WTC11 (cell line): ENCODE measurements at regions of chr12 and their contacts with region 1.

Region 1: DNA sequence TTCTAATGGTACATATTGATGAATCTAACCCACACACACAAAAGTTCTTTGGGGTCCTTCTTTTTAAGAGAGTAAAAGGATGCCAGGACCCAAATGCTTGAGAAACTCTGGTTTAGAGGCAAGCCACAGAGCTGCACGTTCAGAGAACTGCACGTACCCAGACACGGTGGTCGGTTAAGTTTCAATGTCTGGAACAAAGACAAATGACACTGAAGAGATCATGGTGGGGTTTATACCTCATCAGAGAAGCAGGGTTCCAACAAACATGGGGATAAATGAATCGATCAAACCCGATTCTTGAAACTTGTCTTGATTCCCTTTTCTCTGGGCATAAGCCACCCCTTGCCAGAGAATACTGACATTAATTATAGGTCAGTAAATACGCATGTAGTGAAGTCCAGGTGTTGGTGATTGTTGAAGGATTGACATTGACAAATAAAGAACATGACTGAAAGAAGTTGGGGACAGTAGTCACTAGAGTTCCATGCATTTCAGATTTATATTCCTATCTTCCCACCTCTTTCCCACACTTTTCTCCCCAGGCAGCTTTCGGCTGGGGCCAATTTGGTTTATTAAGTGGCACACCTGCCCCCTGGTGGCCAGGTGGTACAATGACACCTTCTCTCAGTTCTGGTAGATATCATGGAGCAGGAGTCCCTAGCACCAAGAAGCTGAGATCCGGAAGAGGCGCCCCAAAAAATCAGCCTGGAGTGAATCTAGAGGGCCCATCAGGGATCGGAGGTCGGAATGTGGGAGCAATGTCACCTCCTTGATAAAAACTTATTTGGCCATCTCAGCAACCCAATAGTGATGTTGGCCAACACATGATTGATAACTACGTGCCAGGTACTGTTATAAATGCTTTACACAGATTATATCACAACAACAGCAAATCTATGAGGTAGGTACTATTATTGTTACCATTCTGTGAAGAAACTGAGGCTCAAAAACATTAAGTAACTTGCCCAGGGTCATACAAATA is 17.8 kb upstream of the HDAC7 start:
- DNase-seq: peak; percentile 75
- ATAC-seq: peak; percentile 61
- H3K4me3 Mint-ChIP-seq: no peak overlapping the region
- H3K27ac Mint-ChIP-seq: no peak overlapping the region
- H3K4me1 Mint-ChIP-seq: peaks cover 19% of the 10 kb centered on the region
- H3K27me3 Mint-ChIP-seq: no peaks in the 10 kb centered on the region
- CTCF ChIP-seq: peak; percentile 96

Region 2: DNA sequence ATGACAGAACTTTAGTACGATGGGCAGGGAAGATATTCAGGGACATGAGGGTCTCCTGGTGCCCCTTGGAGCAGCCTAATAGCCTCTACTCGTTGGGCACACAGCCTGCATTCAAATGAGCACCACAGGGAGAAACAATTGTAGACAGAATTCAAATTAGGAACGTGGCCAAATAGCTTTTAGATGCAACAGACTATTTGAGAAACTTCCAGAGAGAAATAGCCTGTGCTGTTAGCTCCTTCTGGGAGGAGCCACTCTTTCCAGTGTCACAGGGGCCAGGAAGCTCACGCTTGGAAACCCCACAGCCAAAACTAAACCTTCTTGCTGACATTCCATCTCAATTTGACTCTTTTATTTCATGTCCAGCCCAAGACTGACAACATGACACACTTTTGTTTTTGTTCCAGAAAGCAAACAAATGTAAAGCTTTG is 246.1 kb before region 1 on chr12:
- CTCF ChIA-PET with region 1: no interaction called
- POLR2A ChIA-PET with region 1: no interaction called
- DNase-seq: no peak
- ATAC-seq: 0 out of 2 replicates have a peak, but pooled peaks have one; percentile 32
- H3K4me3 Mint-ChIP-seq: no peak overlapping the region
- H3K27ac Mint-ChIP-seq: no peak overlapping the region
- H3K4me1 Mint-ChIP-seq: peaks cover 13% of the 10 kb centered on the region
- H3K27me3 Mint-ChIP-seq: no peaks in the 10 kb centered on the region; the same call in 1 of the 2 replicates
- CTCF ChIP-seq: no peak

Region 3: DNA sequence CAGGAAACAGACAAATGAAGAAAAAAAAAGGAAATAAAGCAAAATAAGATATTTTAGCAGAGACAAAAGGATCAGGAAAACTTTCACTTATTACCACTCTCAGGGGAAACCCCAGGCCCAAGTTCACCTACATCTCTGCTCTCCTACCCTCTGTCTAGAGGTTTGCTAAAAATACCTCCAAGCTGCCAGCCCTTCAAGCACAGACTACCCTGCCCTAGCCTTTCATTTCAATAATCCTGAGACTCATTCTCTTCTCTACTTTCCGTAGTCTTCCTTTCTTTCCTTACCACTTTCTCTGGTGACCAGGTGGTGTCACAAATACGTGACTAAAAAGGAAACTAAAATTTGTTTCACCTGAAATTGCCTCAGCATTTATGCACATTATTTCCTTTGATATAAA is 165.4 kb before region 1 on chr12:
- CTCF ChIA-PET with region 1: no interaction called
- POLR2A ChIA-PET with region 1: no interaction called
- DNase-seq: no peak
- ATAC-seq: no peak
- H3K4me3 Mint-ChIP-seq: no peak overlapping the region
- H3K27ac Mint-ChIP-seq: 0 out of 2 replicates have a peak overlapping the region, but pooled peaks have one; percentile 14
- H3K4me1 Mint-ChIP-seq: peaks cover 8% of the 10 kb centered on the region; the same call in 1 of the 2 replicates
- H3K27me3 Mint-ChIP-seq: no peaks in the 10 kb centered on the region
- CTCF ChIP-seq: no peak

Region 4: DNA sequence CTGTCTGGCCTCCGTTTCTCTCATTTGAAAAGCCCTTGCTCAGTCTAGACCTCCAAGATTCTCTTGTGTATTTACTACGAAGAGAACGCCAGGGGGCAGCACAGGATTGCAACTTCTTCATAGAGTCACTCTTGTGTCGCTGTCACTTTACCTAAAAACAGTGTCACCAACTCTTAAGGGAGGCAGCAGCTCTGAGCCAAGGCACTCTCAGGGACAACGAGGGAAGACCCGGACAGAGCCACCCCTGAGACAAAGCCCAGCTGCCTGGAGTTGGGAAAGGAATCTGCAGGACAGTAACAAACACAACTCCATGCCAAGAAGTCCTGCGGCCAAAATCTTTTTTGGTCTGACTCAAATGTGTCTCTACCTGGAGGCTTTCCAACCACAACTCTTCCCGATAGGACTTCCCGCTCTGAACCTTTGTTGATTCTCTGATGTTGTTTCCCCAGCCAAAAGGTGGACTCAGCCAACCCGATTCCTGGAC is 122.0 kb before region 1 on chr12:
- CTCF ChIA-PET with region 1: interaction called, 54 read pairs
- POLR2A ChIA-PET with region 1: no interaction called
- DNase-seq: peak; percentile 71
- ATAC-seq: peak; percentile 43
- H3K4me3 Mint-ChIP-seq: no peak overlapping the region
- H3K27ac Mint-ChIP-seq: no peak overlapping the region
- H3K4me1 Mint-ChIP-seq: peaks cover 29% of the 10 kb centered on the region
- H3K27me3 Mint-ChIP-seq: peaks cover 72% of the 10 kb centered on the region
- CTCF ChIP-seq: peak; percentile 72

Region 5: GRCh38 chr12:47753034-47754001 is 84.2 kb before region 1 on chr12:
- CTCF ChIA-PET with region 1: interaction called, 41 read pairs
- POLR2A ChIA-PET with region 1: no interaction called
- DNase-seq: peak; percentile 53
- ATAC-seq: peak; percentile 86
- H3K4me3 Mint-ChIP-seq: peak overlapping the region; percentile 44; the same call in 1 of the 2 replicates
- H3K27ac Mint-ChIP-seq: peak overlapping the region; percentile 96
- H3K4me1 Mint-ChIP-seq: peaks cover 62% of the 10 kb centered on the region
- H3K27me3 Mint-ChIP-seq: no peaks in the 10 kb centered on the region; the same call in 1 of the 2 replicates
- CTCF ChIP-seq: no peak

Region 6: GRCh38 chr12:47773062-47773857 is 64.2 kb before region 1 on chr12 and contains the start of gene SLC48A1:
- CTCF ChIA-PET with region 1: interaction called, 110 read pairs
- POLR2A ChIA-PET with region 1: interaction called, 5 read pairs
- DNase-seq: peak; percentile 80
- ATAC-seq: peak; percentile 81
- H3K4me3 Mint-ChIP-seq: peak within 1 kb of the TSS; percentile 82
- H3K27ac Mint-ChIP-seq: peak within 1 kb of the TSS; percentile 32; the same call in 1 of the 2 replicates
- H3K4me1 Mint-ChIP-seq: peaks cover 32% of the 10 kb centered on the region
- H3K27me3 Mint-ChIP-seq: peaks cover 27% of the 10 kb centered on the region
- CTCF ChIP-seq: no peak
- total RNA-seq, gene SLC48A1: 13.5 to 16.8 TPM (median 13.8 TPM) in 3 replicates

Region 7: DNA sequence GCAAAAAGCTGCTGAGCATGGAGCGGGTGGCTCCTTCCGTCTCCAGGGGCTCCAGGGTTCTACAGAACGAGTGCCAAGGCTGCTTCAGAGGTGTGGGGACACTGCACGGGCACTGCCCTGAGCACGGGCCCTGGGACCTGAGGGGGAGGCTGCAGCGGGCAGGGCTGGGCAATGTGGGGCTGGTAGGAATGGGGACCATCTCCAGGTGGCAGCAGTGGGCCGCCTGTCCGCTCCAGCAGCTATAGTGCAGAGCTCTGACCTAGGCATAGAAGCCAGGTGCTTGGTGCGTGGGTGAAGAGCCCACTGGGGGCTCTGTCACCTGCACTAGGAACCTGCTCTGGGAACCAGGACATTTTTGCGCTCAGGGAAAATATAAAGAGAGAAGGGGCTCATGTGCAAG is 40.0 kb before region 1 on chr12:
- CTCF ChIA-PET with region 1: interaction called, 408 read pairs
- POLR2A ChIA-PET with region 1: interaction called, 4 read pairs
- DNase-seq: peak; percentile 69
- ATAC-seq: peak; percentile 83
- H3K4me3 Mint-ChIP-seq: no peak overlapping the region
- H3K27ac Mint-ChIP-seq: no peak overlapping the region; the same call in 1 of the 2 replicates
- H3K4me1 Mint-ChIP-seq: peaks cover 28% of the 10 kb centered on the region
- H3K27me3 Mint-ChIP-seq: no peaks in the 10 kb centered on the region
- CTCF ChIP-seq: 0 out of 2 replicates have a peak, but pooled peaks have one; percentile 27

Region 8: GRCh38 chr12:47850153-47851084 is 12.9 kb after region 1 on chr12:
- CTCF ChIA-PET with region 1: interaction called, 20 read pairs
- POLR2A ChIA-PET with region 1: no interaction called
- DNase-seq: no peak
- ATAC-seq: peak; percentile 25
- H3K4me3 Mint-ChIP-seq: no peak overlapping the region
- H3K27ac Mint-ChIP-seq: no peak overlapping the region
- H3K4me1 Mint-ChIP-seq: peaks cover 20% of the 10 kb centered on the region
- H3K27me3 Mint-ChIP-seq: peaks cover 2% of the 10 kb centered on the region; the same call in 1 of the 2 replicates
- CTCF ChIP-seq: no peak

Region 9: DNA sequence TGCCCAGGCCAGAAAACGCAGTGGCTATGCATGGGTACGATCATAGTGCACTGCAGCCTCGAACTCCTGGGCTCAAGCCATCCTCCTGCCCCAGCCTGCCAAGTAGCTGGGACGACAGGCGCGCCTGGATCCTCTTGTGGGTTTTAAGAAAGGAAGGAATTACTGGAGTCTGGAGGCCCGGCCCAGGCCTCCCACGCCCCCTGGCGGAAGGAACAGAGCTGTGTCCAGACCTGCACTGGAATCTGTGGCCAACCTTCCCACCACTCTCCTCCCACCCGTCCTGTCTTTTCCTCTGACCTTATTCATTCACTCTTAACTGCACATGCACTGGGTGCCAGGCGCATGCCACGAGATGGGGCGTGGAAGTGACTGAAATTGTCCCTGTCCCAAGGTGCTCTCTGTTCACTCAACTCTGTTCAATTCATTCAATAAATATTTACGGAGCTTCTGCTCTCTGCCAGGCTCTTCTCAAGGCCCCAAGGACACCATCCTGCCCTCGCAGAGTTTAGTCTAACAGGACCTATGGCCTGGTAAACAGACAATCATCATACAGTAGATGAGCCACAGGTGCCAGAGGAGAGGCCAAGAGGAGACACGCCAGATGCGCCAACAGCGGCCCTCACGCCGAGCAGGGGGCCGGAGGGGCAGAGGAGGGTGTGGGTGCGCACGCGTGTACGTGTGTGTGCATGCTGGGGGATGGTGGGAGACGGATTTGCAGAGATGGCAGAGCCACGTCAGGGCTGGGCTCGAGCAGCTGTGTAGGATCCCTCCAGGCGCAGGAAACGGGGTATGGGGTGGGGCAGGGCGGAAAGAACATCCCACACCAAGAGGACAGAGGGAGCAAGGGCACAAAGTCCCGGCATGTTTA is 112.2 kb after region 1 on chr12:
- CTCF ChIA-PET with region 1: interaction called, 16 read pairs
- POLR2A ChIA-PET with region 1: no interaction called
- DNase-seq: peak; percentile 85
- ATAC-seq: peak; percentile 94
- H3K4me3 Mint-ChIP-seq: no peak overlapping the region
- H3K27ac Mint-ChIP-seq: no peak overlapping the region
- H3K4me1 Mint-ChIP-seq: peaks cover 13% of the 10 kb centered on the region
- H3K27me3 Mint-ChIP-seq: peaks cover 17% of the 10 kb centered on the region
- CTCF ChIP-seq: peak; percentile 88